Transverse colon (tissue), 4 donors: ENCODE measurements at regions of chr21 and their contacts with region 1.

Region 1: GRCh38 chr21:26522704-26523103 is 50.4 kb downstream of the CYYR1 start:
- DNase-seq: no peak
- H3K4me3 ChIP-seq: no peak overlapping the region
- H3K27ac ChIP-seq: no peak overlapping the region
- H3K4me1 ChIP-seq: no peaks in the 10 kb centered on the region
- H3K27me3 ChIP-seq: no peaks in the 10 kb centered on the region
- CTCF ChIP-seq: no peak
- EP300 ChIP-seq: no peak
- POLR2A ChIP-seq: no peak

Region 2: GRCh38 chr21:26469789-26470188 is 52.9 kb before region 1 on chr21:
- in situ Hi-C with region 1: loop called in 1 of 4 experiments (anchors 10 kb)
- intact Hi-C with region 1: no loop called
- DNase-seq: no peak
- H3K4me3 ChIP-seq: no peak overlapping the region
- H3K27ac ChIP-seq: no peak overlapping the region
- H3K4me1 ChIP-seq: no peaks in the 10 kb centered on the region
- H3K27me3 ChIP-seq: no peaks in the 10 kb centered on the region
- CTCF ChIP-seq: no peak
- EP300 ChIP-seq: no peak
- POLR2A ChIP-seq: no peak